Caco-2 (cell line): ENCODE measurements at regions of chr3 and their contacts with region 1.

Region 1: GRCh38 chr3:172140499-172141391 is 101.4 kb downstream of the FNDC3B start:
- DNase-seq: peak; percentile 86 to 92
- H3K4me3 ChIP-seq: no peak overlapping the region
- H3K4me3 Mint-ChIP-seq: peak overlapping the region; percentile 59
- H3K27ac Mint-ChIP-seq: peak overlapping the region; percentile 81
- H3K4me1 ChIP-seq: peaks cover 58% of the 10 kb centered on the region
- H3K4me1 Mint-ChIP-seq: peaks cover 54% of the 10 kb centered on the region
- H3K27me3 ChIP-seq: no peaks in the 10 kb centered on the region
- H3K27me3 Mint-ChIP-seq: no peaks in the 10 kb centered on the region
- CTCF ChIP-seq: peak in 1 of 2 experiments; percentile 27

Region 2: GRCh38 chr3:171809821-171810628 is 330.7 kb before region 1 on chr3 and contains the start of gene PLD1:
- CTCF ChIA-PET with region 1: no interaction called
- POLR2A ChIA-PET with region 1: no interaction called
- intact Hi-C with region 1: loop called (anchors 1 kb)
- DNase-seq: peak; percentile 87 to 88
- H3K4me3 ChIP-seq: peak within 1 kb of the TSS; percentile 90
- H3K4me3 Mint-ChIP-seq: peak within 1 kb of the TSS; percentile 87
- H3K27ac Mint-ChIP-seq: peak within 1 kb of the TSS; percentile 83
- H3K4me1 ChIP-seq: peaks cover 37% of the 10 kb centered on the region
- H3K4me1 Mint-ChIP-seq: peaks cover 28% of the 10 kb centered on the region
- H3K27me3 ChIP-seq: no peaks in the 10 kb centered on the region
- H3K27me3 Mint-ChIP-seq: no peaks in the 10 kb centered on the region
- CTCF ChIP-seq: no peak
- total RNA-seq, gene PLD1: 5.3 and 5.5 TPM in 2 replicates

Region 3: GRCh38 chr3:172096881-172097420 is 43.8 kb before region 1 on chr3:
- CTCF ChIA-PET with region 1: interaction called, 3 read pairs
- POLR2A ChIA-PET with region 1: no interaction called
- intact Hi-C with region 1: loop called (anchors 1 kb)
- DNase-seq: peak; percentile 87 to 88
- H3K4me3 ChIP-seq: no peak overlapping the region
- H3K4me3 Mint-ChIP-seq: peak overlapping the region; percentile 39
- H3K27ac Mint-ChIP-seq: peak overlapping the region; percentile 80
- H3K4me1 ChIP-seq: peaks cover 72% of the 10 kb centered on the region
- H3K4me1 Mint-ChIP-seq: peaks cover 39% of the 10 kb centered on the region
- H3K27me3 ChIP-seq: no peaks in the 10 kb centered on the region
- H3K27me3 Mint-ChIP-seq: no peaks in the 10 kb centered on the region
- CTCF ChIP-seq: no peak

Region 4: DNA sequence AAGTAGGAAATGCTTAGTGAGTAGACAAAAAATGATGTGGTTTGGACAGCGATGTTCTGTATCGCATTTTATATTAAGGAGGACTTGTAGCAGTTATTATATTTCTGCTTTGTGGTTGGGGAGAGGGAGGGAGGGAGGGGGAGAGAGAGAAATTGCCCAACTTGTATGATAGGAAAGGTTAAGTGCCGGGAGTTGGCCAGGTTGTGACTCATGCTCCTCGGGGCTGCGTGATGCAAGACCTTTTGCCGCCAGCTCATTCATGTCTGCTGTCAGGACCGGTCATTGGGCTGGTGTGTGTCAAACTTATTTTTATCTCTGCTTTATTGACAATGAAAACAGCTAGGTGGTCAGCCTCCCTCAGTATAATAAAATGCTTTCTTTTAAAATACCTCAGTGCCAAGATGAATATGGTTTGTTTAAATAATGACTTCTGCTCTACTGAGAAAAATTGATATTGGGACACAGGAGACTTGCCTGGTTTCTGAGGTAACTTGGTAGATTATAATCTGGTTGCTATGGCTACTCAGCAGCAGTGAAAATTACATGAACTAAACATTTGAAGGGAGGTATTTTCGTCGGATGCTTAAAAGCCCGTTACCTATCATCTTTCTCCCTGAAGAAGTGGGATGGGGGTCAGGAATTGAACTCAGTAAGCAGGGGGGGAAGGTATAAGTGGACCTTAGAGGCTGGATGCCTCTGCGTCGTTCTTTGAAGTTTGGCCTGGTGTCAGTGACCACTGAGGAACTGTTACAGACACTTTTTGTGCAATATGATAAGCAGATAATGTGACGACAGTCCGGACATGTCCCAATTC is 10.7 kb before region 1 on chr3:
- CTCF ChIA-PET with region 1: no interaction called
- POLR2A ChIA-PET with region 1: no interaction called
- intact Hi-C with region 1: loop called (anchors 1 kb)
- DNase-seq: peak; percentile 83 to 88
- H3K4me3 ChIP-seq: no peak overlapping the region
- H3K4me3 Mint-ChIP-seq: no peak overlapping the region
- H3K27ac Mint-ChIP-seq: peak overlapping the region; percentile 92
- H3K4me1 ChIP-seq: peaks cover 65% of the 10 kb centered on the region
- H3K4me1 Mint-ChIP-seq: peaks cover 58% of the 10 kb centered on the region
- H3K27me3 ChIP-seq: no peaks in the 10 kb centered on the region
- H3K27me3 Mint-ChIP-seq: no peaks in the 10 kb centered on the region
- CTCF ChIP-seq: no peak

Region 5: DNA sequence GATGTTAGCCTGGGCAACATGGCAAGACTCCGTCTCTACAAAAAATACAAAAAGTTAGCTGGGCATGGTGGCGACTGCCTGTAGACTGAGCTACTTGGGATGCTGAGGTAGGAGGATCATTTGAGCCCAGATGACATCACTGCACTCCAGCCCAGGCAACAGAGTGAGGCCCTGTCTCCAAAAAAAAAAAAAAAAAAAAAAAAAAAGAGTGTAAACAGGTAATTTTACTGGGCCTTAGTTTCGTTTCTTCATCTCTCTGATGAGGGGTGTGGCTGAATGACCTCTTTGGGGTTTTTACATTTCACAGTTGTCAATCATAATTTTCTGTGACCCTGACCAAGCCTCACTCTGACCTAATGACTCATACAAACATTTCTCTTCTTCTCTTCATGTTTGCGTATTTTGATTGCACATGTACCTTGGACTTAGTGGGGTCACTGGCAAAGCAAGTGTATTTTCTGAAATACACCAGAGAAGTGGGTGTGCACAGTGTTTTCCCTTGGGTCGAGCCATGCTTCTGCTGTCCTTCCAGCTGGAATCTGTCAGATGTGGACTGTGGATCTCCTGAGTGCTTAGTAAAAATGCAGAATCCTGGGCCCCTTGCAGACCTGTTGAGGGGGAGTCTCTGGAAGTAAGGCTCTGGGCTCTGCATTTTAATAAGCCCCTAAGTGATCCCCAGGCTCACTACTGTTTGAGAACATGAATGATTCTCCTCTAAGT is 39.1 kb after region 1 on chr3:
- CTCF ChIA-PET with region 1: no interaction called
- POLR2A ChIA-PET with region 1: no interaction called
- intact Hi-C with region 1: loop called (anchors 1 kb)
- DNase-seq: peak; percentile 58 to 63
- H3K4me3 ChIP-seq: no peak overlapping the region
- H3K4me3 Mint-ChIP-seq: peak overlapping the region; percentile 50
- H3K27ac Mint-ChIP-seq: no peak overlapping the region
- H3K4me1 ChIP-seq: peaks cover 17% of the 10 kb centered on the region
- H3K4me1 Mint-ChIP-seq: peaks cover 16% of the 10 kb centered on the region
- H3K27me3 ChIP-seq: no peaks in the 10 kb centered on the region
- H3K27me3 Mint-ChIP-seq: no peaks in the 10 kb centered on the region
- CTCF ChIP-seq: no peak

Region 6: DNA sequence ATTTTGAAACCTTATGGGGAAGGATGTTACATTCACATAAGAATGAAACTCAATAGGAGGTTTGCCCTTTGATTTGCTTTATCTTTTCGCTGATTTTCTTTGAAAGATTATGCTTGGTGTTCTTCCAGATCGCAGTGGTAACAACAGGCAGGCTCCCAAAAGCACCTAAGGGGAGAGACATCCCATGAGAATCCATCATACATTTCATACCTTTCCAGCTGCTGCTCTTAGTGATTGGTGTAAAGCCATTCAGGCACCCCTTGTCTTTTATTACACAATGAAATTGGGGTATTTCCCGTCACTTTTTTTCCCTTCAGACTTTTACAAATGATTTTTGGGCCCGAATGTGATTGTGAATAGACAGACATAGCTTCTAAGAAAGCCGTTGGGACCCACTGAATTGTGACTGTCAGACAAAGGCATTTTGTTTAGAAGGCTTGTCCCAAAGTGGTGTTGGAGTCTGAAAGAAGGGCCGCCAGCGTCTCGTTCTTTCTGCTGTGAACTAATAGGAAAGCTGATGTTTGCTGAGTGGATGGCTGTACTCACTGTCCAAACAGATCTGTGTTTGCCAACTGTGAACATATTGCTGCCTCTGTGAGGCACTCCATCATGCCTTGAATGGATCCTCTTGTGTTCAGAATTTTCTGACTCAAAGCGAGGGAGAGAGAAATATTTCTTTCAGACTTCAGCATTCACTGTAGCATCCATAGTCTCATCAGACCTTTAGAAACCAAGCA is 62.9 kb after region 1 on chr3:
- CTCF ChIA-PET with region 1: no interaction called
- POLR2A ChIA-PET with region 1: no interaction called
- intact Hi-C with region 1: loop called (anchors 1 kb)
- DNase-seq: peak; percentile 65 to 73
- H3K4me3 ChIP-seq: peak overlapping the region; percentile 1
- H3K4me3 Mint-ChIP-seq: peak overlapping the region; percentile 61
- H3K27ac Mint-ChIP-seq: peak overlapping the region; percentile 81
- H3K4me1 ChIP-seq: peaks cover 25% of the 10 kb centered on the region
- H3K4me1 Mint-ChIP-seq: peaks cover 21% of the 10 kb centered on the region
- H3K27me3 ChIP-seq: no peaks in the 10 kb centered on the region
- H3K27me3 Mint-ChIP-seq: no peaks in the 10 kb centered on the region
- CTCF ChIP-seq: no peak

Region 7: GRCh38 chr3:172323894-172324610 is 183.3 kb after region 1 on chr3:
- CTCF ChIA-PET with region 1: no interaction called
- POLR2A ChIA-PET with region 1: no interaction called
- intact Hi-C with region 1: no loop called
- DNase-seq: peak in 1 of 2 experiments; percentile 14
- H3K4me3 ChIP-seq: no peak overlapping the region
- H3K4me3 Mint-ChIP-seq: no peak overlapping the region
- H3K27ac Mint-ChIP-seq: no peak overlapping the region
- H3K4me1 ChIP-seq: no peaks in the 10 kb centered on the region
- H3K4me1 Mint-ChIP-seq: peaks cover 12% of the 10 kb centered on the region
- H3K27me3 ChIP-seq: no peaks in the 10 kb centered on the region
- H3K27me3 Mint-ChIP-seq: no peaks in the 10 kb centered on the region
- CTCF ChIP-seq: no peak